AG04450 (cell line): ENCODE measurements at regions of chr6 and their contacts with region 1.

Region 1: DNA sequence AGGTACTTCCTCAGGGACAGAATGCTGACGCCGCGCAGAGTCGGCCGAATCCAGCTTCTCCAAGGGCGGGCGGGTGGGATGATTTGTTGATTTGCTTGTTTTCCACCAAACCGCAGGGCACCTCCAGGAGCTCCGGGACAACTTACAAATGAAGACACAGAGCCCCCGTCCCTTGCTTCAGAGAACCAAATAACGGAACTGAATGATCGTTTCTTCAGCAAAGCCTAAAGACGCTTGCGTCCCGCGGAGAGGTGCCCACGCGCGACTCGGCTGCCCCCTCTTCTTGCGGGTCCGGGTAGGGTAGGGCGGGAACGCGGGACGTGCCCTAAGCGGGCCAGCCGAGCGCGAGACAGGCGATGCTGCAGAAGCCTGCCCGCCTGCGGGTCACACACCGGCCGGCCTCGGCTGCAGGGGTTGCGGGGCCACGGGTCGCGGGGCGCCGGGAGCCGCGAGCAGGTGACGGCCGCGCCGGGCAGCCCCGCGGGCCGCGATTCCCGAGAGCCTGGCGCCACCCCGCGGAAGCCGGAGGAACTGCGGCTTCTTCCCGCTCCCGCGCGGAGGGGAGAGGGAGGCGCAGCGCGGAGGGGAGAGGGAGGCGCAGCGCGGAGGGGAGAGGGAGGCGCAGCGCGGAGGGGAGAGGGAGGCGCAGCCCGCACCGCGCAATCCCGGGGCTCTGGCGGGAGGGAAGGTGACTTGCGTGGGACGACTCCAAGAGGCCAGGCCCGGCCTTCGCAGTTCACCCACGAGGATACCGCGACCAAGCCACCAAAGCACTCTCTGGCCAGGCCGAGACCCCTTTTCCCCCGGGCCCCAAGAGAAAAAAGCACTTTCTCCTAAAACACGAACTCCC is 7.7 kb upstream of the FOXF2 start:
- DNase-seq: no peak
- H3K4me3 ChIP-seq: peak overlapping the region; percentile 50
- H3K27ac ChIP-seq: no peak overlapping the region
- H3K27me3 ChIP-seq: peaks cover 58% of the 10 kb centered on the region
- CTCF ChIP-seq: peak; percentile 66

Region 2: DNA sequence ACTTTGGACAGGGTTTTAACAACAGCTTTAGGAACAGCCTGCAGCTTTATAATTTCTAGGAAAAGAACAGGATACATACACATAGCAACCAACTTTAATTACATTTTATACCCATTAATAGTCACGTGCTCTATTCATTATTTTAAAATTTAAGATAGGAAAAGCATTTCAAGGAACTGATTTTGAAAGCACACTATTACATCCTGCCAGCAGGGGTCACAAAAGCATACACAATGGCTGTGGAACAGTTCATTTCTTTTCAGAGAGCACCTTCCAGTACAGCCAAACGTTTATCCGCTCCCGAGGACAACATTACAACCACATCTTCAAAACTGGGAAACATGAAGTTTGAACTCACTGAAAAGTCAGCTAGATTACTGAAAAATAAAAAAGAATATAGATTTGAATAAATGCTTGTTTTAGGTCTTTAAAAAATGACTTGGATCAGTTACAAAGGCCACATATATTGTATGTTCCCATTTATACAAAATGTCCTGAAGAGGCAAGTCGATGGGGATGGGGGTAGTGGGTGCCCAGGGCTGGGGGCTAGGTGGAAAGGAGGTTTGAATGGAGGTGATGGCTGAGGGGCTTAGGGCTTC is 584.1 kb before region 1 on chr6:
- CTCF ChIA-PET with region 1: interaction called, 24 read pairs
- POLR2A ChIA-PET with region 1: no interaction called
- DNase-seq: peak; percentile 21
- H3K4me3 ChIP-seq: no peak overlapping the region
- H3K27ac ChIP-seq: no peak overlapping the region
- H3K27me3 ChIP-seq: peaks cover 21% of the 10 kb centered on the region
- CTCF ChIP-seq: peak; percentile 80

Region 3: DNA sequence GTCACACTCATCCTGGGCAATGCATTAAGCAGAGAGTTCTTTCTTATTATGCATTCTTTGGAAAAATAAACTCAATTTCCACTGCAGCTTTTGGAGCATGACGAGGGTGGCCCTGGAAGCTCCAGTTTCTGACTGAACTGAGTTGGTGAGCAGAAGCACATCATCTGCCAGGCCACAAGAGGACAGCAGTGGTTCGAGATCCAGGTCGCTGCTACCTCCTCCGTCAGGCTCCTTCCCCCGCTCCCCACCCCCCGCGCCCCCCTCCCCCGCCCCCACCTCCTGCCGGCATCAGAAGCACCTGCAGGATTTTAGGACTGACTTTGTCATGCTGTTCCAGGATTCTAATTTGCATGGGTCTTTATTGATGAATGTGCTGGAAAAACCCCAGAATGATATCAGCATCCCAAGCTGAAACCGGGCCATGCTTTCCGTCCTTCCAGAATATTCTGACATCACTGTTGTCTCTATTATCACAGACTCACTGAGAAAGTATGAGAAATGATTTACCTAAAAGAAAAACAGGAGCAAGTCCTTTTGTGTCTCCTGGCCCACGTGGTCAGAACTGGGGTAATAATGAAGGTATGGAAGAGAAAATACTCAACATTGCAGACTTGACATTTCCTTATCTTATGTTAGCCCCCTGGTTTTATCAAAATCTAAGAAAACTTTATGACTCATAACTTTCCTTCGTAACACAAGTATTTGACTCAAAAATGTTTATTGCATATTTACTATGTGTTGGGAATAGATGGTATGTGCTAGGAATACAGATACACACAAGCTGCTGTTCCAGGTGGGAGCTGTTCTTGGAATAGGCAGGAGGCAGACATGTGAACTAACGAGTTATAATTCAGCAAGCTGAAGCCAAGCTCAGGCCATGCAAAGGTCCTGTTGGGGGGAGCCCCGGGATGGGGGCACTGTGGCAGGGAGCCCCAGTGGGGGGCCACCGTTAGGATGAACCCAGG is 468.6 kb before region 1 on chr6:
- CTCF ChIA-PET with region 1: interaction called, 10 read pairs
- POLR2A ChIA-PET with region 1: interaction called, 4 read pairs
- DNase-seq: peak; percentile 8
- H3K4me3 ChIP-seq: no peak overlapping the region
- H3K27ac ChIP-seq: no peak overlapping the region
- H3K27me3 ChIP-seq: peaks cover 5% of the 10 kb centered on the region
- CTCF ChIP-seq: peak; percentile 71

Region 4: GRCh38 chr6:1131285-1132079 is 250.2 kb before region 1 on chr6:
- CTCF ChIA-PET with region 1: interaction called, 11 read pairs
- POLR2A ChIA-PET with region 1: no interaction called
- DNase-seq: peak; percentile 76
- H3K4me3 ChIP-seq: no peak overlapping the region
- H3K27ac ChIP-seq: peak overlapping the region; percentile 25
- H3K27me3 ChIP-seq: peaks cover 3% of the 10 kb centered on the region
- CTCF ChIP-seq: no peak

Region 5: DNA sequence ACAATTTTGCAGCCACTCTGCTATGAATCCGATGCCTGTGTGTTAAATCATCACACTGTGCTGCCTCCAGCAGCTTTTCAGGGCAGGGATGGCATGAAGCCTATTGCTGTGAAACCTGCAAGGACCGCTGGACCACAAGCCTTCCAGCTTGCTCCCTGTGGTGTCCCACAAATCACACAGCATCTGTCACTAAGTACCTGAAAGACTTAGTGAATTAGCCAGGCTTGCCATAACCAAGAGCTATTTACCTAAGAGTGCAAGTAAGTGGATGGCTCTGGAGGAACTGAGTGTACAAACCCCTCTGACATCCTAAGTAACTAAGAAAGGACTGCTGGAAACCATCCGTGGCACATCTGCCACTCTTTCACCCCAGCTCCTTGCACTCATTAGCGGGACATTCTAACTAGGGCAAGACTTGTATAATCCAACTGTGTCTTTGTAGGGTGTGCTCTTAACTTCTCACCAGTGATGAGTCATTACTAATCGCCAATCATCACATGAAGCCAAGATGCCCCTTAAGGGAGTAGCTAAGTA is 35.1 kb before region 1 on chr6:
- CTCF ChIA-PET with region 1: interaction called, 12 read pairs
- POLR2A ChIA-PET with region 1: no interaction called
- DNase-seq: no peak
- H3K4me3 ChIP-seq: no peak overlapping the region
- H3K27ac ChIP-seq: no peak overlapping the region
- H3K27me3 ChIP-seq: no peaks in the 10 kb centered on the region
- CTCF ChIP-seq: no peak

Region 6: DNA sequence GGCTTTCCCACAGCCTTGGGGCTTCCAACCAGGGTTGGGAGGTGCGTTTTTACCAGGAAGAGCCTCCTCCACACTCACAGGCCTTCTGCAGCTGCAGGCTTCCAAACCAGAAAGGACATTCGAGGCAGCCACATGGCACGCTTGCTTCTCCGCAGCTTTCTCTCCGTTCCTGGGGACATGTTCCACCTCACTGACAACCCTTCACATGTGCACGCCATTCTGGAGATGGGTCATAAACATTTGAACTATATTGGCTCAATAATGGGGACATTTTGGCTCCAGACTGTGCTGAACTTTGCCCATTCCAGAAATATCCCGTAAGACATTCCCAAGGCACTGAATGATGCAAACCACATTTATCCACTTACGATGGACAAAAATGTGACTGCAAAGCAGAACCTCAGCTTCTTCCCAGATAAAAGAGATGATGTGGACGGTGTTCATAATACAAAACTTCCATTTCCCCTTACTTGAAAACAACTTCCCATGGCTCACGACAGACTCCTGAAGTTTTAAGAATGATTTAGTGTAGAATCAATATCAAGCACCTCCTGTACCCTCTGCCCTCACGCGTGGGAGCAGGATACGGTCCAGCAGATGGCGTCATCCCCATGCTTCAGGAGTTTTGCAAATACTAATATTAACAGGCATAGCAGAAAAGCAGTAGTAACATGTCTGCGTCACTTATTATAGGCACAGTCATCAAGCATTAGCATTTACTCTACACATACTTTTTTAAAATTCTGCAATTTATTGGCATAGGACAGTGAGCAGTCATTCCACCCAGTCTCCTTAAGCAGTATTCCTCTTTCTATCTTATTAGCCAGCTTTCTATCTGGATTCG is 17.8 kb before region 1 on chr6:
- CTCF ChIA-PET with region 1: interaction called, 10 read pairs
- POLR2A ChIA-PET with region 1: no interaction called
- DNase-seq: no peak
- H3K4me3 ChIP-seq: no peak overlapping the region
- H3K27ac ChIP-seq: no peak overlapping the region
- H3K27me3 ChIP-seq: no peaks in the 10 kb centered on the region
- CTCF ChIP-seq: peak; percentile 36